ENCODE measurements at regions of chr6 and their contacts with region 1.

Region 1: DNA sequence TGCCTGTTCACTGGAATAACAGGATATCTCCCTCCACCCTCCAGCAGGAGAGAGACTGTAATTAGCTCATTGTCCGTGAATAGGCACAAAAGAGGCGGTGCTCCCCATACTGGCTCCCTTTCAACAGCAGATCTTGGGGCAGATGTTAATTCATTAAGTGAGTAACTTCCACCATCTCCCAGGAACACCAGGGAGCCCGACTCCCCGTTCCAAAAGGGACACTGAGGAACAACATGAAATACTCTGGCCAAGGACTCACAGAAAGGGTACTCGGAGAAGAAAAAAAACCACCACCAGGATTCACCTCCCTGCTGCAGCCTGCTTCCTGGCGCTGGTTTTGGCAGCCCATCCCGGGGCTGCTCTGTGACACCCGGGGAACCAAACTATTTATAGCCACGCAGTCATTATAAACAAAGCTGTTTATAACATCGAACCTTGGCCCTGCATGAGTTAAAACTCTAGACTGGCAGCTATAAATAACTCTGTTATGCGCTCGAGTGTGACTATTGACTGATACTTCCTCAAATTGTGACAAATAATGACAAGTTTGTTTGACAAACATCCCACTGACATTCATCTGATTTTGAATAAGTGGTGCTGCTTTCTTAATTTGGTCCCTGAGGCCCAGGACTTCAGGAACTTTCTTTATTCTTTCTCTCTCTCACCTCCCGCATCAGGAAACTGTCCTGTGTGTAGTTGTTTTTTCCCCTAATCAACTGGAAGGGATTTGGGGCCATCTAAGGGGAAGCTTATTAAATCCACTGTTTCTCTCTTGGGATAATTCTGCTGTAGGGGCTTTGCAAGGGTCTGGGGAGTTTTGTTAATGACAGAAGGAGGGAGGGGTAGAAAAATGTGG is 521.6 kb downstream of the CD83 start:
- DNase-seq: no peak
- H3K4me3 Mint-ChIP-seq: no peak overlapping the region
- H3K27ac Mint-ChIP-seq: no peak overlapping the region
- H3K4me1 Mint-ChIP-seq: peaks cover 48% of the 10 kb centered on the region
- H3K27me3 Mint-ChIP-seq: no peaks in the 10 kb centered on the region

Region 2: GRCh38 chr6:14270925-14271791 is 368.0 kb before region 1 on chr6:
- CTCF ChIA-PET with region 1: no interaction called
- intact Hi-C with region 1: loop called (anchors 5 kb)
- DNase-seq: peak; percentile 82
- H3K4me3 Mint-ChIP-seq: peak overlapping the region; percentile 5
- H3K27ac Mint-ChIP-seq: peak overlapping the region; percentile 50
- H3K4me1 Mint-ChIP-seq: peaks cover 36% of the 10 kb centered on the region
- H3K27me3 Mint-ChIP-seq: no peaks in the 10 kb centered on the region

Region 3: GRCh38 chr6:14417377-14417776 is 221.8 kb before region 1 on chr6:
- CTCF ChIA-PET with region 1: no interaction called
- intact Hi-C with region 1: no loop called
- DNase-seq: no peak
- H3K4me3 Mint-ChIP-seq: no peak overlapping the region
- H3K27ac Mint-ChIP-seq: no peak overlapping the region
- H3K4me1 Mint-ChIP-seq: no peaks in the 10 kb centered on the region
- H3K27me3 Mint-ChIP-seq: no peaks in the 10 kb centered on the region

Region 4: DNA sequence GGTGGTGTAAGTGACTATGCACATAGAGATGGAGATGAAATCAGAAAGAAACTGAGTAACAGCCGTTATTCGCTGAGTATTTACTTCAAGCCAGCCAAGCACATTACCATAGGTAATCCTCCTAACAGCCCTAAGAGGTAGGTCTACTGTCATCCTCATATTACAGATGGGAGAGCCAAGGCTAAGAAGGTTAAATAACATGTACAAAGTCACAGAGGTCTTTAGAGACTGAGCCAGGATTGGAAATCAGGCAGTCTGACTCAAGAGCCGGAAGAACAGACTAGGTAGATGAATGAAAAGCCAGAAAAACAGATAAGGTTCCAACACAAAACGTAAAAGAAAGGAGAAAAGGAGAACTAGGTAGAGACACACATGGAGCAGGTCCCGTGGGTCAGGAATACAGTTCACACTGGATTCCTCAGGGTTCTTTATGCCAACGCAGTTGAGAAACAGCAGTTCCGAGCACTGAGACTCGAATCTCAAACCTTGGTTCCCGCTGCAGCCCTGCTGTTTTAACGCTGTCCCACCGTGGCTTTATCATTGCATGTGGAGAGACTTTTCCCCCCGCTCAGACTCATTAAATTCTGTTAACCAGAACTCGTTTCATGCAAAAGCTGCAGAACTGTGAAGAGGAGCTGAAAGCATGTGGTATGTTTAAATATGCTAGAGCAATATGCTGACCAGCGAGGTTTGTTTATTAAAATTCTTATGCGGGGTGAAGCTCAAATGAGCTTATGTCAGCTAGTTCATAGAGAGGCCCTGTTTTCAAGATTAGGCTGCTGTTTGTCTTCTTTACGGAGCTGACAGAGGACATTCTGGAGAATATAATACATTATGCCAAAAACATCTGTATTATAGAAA is 16.3 kb after region 1 on chr6:
- CTCF ChIA-PET with region 1: interaction called, 4 read pairs
- intact Hi-C with region 1: loop called (anchors 2 kb)
- DNase-seq: no peak
- H3K4me3 Mint-ChIP-seq: no peak overlapping the region
- H3K27ac Mint-ChIP-seq: peak overlapping the region; percentile 16
- H3K4me1 Mint-ChIP-seq: peaks cover 37% of the 10 kb centered on the region
- H3K27me3 Mint-ChIP-seq: no peaks in the 10 kb centered on the region

Region 5: GRCh38 chr6:14660806-14661579 is 21.9 kb after region 1 on chr6:
- CTCF ChIA-PET with region 1: interaction called, 4 read pairs
- intact Hi-C with region 1: loop called (anchors 2 kb)
- DNase-seq: peak; percentile 71
- H3K4me3 Mint-ChIP-seq: no peak overlapping the region
- H3K27ac Mint-ChIP-seq: no peak overlapping the region
- H3K4me1 Mint-ChIP-seq: peaks cover 44% of the 10 kb centered on the region
- H3K27me3 Mint-ChIP-seq: no peaks in the 10 kb centered on the region

Region 6: GRCh38 chr6:14784596-14785492 is 145.7 kb after region 1 on chr6:
- CTCF ChIA-PET with region 1: no interaction called
- intact Hi-C with region 1: no loop called
- DNase-seq: peak; percentile 35
- H3K4me3 Mint-ChIP-seq: peak overlapping the region; percentile 47
- H3K27ac Mint-ChIP-seq: peak overlapping the region; percentile 53
- H3K4me1 Mint-ChIP-seq: peaks cover 24% of the 10 kb centered on the region
- H3K27me3 Mint-ChIP-seq: no peaks in the 10 kb centered on the region

Region 7: DNA sequence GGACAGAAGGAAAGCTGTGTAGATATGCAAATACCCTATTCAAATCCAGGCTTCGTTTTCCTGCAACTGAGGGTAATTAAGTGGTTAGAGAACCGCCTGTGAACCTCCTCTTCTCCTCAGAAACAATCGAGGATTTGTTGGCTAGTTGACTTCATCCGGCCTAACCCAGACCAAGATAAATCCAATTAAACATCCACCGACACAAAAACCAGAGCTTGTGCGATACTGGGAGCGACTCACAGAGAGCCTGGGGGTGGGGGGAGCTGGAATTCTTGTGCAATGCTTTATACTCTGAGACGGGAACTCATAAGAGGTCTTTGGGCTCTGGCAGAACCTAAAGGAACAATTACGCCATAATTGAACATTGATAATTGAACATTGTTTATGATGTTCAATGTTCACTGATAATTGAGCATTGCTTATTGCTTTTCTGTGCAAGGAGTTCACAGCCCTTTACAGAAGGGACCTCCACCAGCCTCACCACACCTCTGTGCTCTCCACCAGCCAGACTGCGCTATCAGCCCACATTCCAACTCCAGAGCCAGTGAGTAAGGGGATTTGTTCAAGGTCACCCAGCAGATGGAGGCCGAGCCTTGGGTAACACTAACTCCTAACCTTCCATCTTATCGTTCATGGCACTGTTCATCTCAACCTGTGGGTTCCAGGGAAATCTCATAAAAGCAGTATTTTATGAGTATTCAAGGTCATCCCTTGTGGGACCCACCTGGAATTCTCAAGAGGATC is 177.2 kb after region 1 on chr6:
- CTCF ChIA-PET with region 1: no interaction called
- intact Hi-C with region 1: no loop called
- DNase-seq: no peak
- H3K4me3 Mint-ChIP-seq: no peak overlapping the region
- H3K27ac Mint-ChIP-seq: no peak overlapping the region
- H3K4me1 Mint-ChIP-seq: peaks cover 10% of the 10 kb centered on the region
- H3K27me3 Mint-ChIP-seq: no peaks in the 10 kb centered on the region

Region 8: GRCh38 chr6:15479761-15480160 is 840.6 kb after region 1 on chr6:
- CTCF ChIA-PET with region 1: no interaction called
- intact Hi-C with region 1: loop called (anchors 10 kb)
- DNase-seq: no peak
- H3K4me3 Mint-ChIP-seq: no peak overlapping the region
- H3K27ac Mint-ChIP-seq: no peak overlapping the region
- H3K4me1 Mint-ChIP-seq: peaks cover 59% of the 10 kb centered on the region
- H3K27me3 Mint-ChIP-seq: no peaks in the 10 kb centered on the region